ENCODE measurements at regions of chr13 and their contacts with region 1.

Region 1: GRCh38 chr13:33723772-33724435 is 94.0 kb upstream of the RFC3 start:
- DNase-seq: peak; percentile 84
- ATAC-seq: peak; percentile 85

Region 2: DNA sequence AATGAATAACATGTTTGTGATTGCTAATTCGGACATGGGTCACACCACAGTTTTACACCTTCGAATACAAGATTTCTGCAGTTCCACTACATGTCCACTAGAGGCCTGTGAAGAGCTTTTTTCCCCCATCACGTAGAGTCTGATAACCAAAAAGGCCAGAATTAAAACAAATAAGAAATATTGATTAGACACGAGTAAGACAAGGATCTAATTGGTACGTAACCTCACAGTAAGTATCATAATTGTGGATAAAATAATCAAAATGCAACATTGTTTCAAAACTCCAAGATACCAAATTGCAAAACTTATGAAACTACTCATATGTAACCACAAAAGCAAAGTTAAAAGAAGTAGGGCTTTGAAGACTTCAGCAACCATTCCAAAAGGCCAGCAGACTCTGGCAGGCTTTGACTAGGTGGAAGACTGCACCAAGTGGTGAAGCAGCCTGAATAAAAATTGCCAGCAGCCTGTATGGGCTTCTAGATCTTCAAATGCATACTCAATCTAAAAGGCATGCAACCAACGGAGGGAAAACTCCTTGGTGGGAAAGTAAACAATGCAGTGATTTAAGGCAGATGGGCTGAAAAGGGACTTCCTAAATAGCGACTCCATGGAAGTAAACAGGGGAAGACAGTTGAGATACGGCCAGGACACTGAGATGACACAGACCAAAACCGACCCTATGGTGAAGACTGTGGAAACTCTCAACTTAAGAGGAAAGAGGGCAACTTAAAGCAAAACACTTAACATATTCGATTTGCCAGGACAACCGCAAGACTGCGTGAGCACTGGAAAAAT is 495.1 kb before region 1 on chr13:
- intact Hi-C with region 1: loop called (anchors 10 kb)
- DNase-seq: no peak
- ATAC-seq: peak; percentile 9

Region 3: DNA sequence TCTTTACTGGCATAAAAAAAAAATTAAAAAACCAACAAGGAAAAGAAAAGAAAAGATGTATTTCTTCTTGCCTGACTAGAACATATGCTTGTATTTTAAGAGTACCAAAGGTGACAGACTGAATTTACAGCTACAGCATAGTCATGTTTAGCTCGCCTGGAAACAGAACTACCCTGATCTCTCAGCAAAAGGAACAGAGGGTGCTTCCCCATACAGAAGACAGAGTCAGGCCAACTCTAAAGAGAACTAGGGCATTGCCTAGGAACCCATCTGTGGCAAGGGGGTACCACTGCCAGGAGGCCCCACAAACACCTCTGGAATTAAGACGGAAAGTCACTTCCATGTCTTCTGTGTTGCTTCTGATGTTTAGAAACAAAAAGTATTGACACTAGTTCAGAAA is 186.2 kb before region 1 on chr13:
- intact Hi-C with region 1: no loop called
- DNase-seq: peak; percentile 34
- ATAC-seq: no peak

Region 4: GRCh38 chr13:33610471-33611015 is 113.4 kb before region 1 on chr13:
- intact Hi-C with region 1: loop called (anchors 2 kb)
- DNase-seq: peak; percentile 86
- ATAC-seq: peak; percentile 88

Measured in Right ventricle myocardium inferior (tissue), 1 donor.